HepG2 (cell line): ENCODE measurements at regions of chr17 and their contacts with region 1.

Region 1: DNA sequence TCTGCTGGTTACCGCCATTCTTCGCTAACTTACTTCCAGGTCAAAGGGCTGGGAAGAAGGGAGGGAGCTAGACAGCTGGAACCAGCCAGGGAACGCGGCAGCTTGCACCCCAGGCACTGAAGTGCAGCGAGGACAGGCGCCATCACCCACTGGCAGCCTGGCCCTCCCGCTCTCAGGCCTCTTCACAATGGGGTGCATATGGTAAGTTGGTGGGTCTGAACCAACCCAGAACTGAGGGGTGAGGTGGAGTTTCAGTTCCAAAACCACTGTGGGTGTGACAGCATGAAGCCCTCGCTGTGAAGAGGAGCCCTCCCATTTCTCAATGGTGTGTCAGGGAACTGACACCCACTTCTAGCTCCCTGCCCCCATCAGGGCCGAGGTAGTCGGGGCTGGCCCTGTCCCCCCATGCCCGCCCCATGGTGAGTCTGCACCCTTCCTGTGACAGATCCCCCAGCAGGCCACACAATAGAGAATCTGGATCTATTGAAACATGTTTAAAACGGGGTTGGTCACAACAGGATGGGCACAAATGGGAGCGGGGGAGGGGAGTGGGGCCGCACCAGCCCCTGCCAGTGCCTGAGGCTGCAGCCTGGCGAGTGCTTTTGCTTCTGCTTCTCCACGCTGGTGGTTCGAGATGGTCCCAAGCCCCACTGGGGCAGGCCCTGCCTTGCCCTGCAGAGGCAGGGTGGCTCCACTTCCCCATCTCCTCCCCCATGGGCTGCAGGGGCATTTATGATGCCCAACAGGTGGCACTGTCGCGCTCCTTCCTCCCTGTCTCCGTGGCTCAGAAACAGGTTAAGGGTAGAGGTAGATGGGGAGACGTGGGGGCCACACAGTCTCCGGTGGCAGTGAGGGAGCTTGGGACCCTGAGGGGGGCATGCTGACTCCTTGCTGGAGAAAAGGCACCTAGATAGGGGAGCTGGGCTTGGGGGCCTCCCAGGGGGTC is 2.3 kb downstream of the LIMD2 start:
- DNase-seq: peak; percentile 45
- ATAC-seq: peak; percentile 39
- H3K4me3 ChIP-seq: no peak overlapping the region
- H3K27ac ChIP-seq: no peak overlapping the region
- H3K4me1 ChIP-seq: peaks cover 18% of the 10 kb centered on the region
- H3K27me3 ChIP-seq: no peaks in the 10 kb centered on the region
- CTCF ChIP-seq: peak; percentile 84
- EP300 ChIP-seq: no peak
- POLR2A ChIP-seq: peak in 1 of 2 experiments; percentile 44; a peak in 1 of 4 replicates
- RAD21 ChIP-seq: peak; percentile 33; the same call in 1 of the 2 replicates

Region 2: GRCh38 chr17:63419949-63420867 is 277.4 kb before region 1 on chr17:
- CTCF ChIA-PET with region 1: interaction called, 9 read pairs
- POLR2A ChIA-PET with region 1: no interaction called
- in situ Hi-C with region 1: loop called (anchors 10 kb)
- intact Hi-C with region 1: loop called (anchors 5 kb)
- DNase-seq: no peak
- ATAC-seq: no peak
- H3K4me3 ChIP-seq: no peak overlapping the region
- H3K27ac ChIP-seq: no peak overlapping the region
- H3K4me1 ChIP-seq: no peaks in the 10 kb centered on the region
- H3K27me3 ChIP-seq: peaks cover 20 to 98% of the 10 kb centered on the region in 2 experiments
- CTCF ChIP-seq: no peak
- EP300 ChIP-seq: no peak
- POLR2A ChIP-seq: no peak
- RAD21 ChIP-seq: no peak

Region 3: GRCh38 chr17:63685041-63685440 is 12.6 kb before region 1 on chr17:
- CTCF ChIA-PET with region 1: no interaction called
- POLR2A ChIA-PET with region 1: no interaction called
- in situ Hi-C with region 1: no loop called
- intact Hi-C with region 1: no loop called
- DNase-seq: no peak
- ATAC-seq: no peak
- H3K4me3 ChIP-seq: no peak overlapping the region
- H3K27ac ChIP-seq: no peak overlapping the region
- H3K4me1 ChIP-seq: no peaks in the 10 kb centered on the region
- H3K27me3 ChIP-seq: no peaks in the 10 kb centered on the region
- CTCF ChIP-seq: no peak
- EP300 ChIP-seq: no peak
- POLR2A ChIP-seq: no peak
- RAD21 ChIP-seq: no peak

Region 4: GRCh38 chr17:63735691-63736090 is 38.1 kb after region 1 on chr17:
- CTCF ChIA-PET with region 1: no interaction called
- POLR2A ChIA-PET with region 1: no interaction called
- in situ Hi-C with region 1: no loop called
- intact Hi-C with region 1: no loop called
- DNase-seq: no peak
- ATAC-seq: no peak
- H3K4me3 ChIP-seq: no peak overlapping the region
- H3K27ac ChIP-seq: no peak overlapping the region
- H3K4me1 ChIP-seq: peaks cover 6% of the 10 kb centered on the region; the same call in 1 of the 2 replicates
- H3K27me3 ChIP-seq: no peaks in the 10 kb centered on the region
- CTCF ChIP-seq: no peak
- EP300 ChIP-seq: no peak
- POLR2A ChIP-seq: no peak
- RAD21 ChIP-seq: no peak

Region 5: GRCh38 chr17:63835167-63835720 is 137.6 kb after region 1 on chr17:
- CTCF ChIA-PET with region 1: no interaction called
- POLR2A ChIA-PET with region 1: no interaction called
- in situ Hi-C with region 1: no loop called
- intact Hi-C with region 1: no loop called
- DNase-seq: no peak
- ATAC-seq: no peak
- H3K4me3 ChIP-seq: no peak overlapping the region
- H3K27ac ChIP-seq: no peak overlapping the region
- H3K4me1 ChIP-seq: peaks cover 18% of the 10 kb centered on the region
- H3K27me3 ChIP-seq: no peaks in the 10 kb centered on the region
- CTCF ChIP-seq: no peak
- EP300 ChIP-seq: no peak
- POLR2A ChIP-seq: peak in 1 of 2 experiments; percentile 19; a peak in 2 of 4 replicates
- RAD21 ChIP-seq: no peak